ENCODE measurements at regions of chr20 and their contacts with region 1.

Region 1: GRCh38 chr20:25310268-25310920 is 62.5 kb downstream of the PYGB start:
- DNase-seq: peak; percentile 71 to 91
- H3K4me3 ChIP-seq: peak overlapping the region; percentile 39; the same call in 1 of the 2 replicates
- H3K27ac ChIP-seq: peak overlapping the region; percentile 80
- H3K4me1 ChIP-seq: peaks cover 43% of the 10 kb centered on the region
- H3K27me3 ChIP-seq: no peaks in the 10 kb centered on the region
- CTCF ChIP-seq: peak; percentile 68

Region 2: DNA sequence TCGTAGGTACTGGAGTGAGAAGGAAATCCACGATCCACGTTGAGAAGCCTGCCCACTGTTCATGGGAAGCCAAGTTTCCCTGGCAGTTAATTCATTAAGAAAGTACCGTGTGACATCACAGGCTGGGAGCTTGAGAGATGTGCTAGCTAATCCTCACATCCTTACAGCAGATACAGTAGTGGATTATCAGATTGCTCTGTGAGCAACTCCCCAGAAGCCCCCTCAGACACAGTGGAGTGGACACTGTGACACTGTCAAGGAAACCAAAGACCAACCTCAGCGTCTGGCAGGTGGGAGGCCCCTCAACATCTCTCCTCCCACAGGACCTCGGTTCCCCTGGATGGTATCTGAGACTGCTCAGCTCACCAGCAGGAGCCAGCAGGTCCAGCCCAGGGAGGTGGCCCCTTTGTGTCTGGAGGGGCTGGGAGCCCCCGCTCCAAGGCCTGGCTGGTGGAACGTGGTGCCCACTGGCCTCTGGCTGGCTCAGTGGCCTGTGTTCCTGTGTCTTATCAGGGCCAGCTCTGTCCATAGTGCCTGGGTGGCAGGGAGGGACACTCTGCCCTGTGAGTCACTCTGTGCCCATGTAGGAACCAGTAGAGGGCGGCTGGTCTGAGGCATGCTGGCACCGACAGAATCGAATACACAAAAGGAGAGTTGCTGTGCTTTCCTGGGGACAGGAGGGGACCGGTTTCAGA is 55.3 kb before region 1 on chr20:
- CTCF ChIA-PET with region 1: no interaction called
- POLR2A ChIA-PET with region 1: no interaction called
- intact Hi-C with region 1: loop called (anchors 2 kb)
- DNase-seq: peak in 1 of 2 experiments; percentile 89
- H3K4me3 ChIP-seq: no peak overlapping the region; the same call in 1 of the 2 replicates
- H3K27ac ChIP-seq: peak overlapping the region; percentile 86; the same call in 1 of the 2 replicates
- H3K4me1 ChIP-seq: peaks cover 65% of the 10 kb centered on the region
- H3K27me3 ChIP-seq: no peaks in the 10 kb centered on the region
- CTCF ChIP-seq: no peak

Region 3: GRCh38 chr20:25369529-25369928 is 59.1 kb after region 1 on chr20:
- CTCF ChIA-PET with region 1: interaction called, 16 read pairs
- POLR2A ChIA-PET with region 1: no interaction called
- intact Hi-C with region 1: no loop called
- DNase-seq: no peak
- H3K4me3 ChIP-seq: no peak overlapping the region
- H3K27ac ChIP-seq: no peak overlapping the region
- H3K4me1 ChIP-seq: no peaks in the 10 kb centered on the region
- H3K27me3 ChIP-seq: no peaks in the 10 kb centered on the region
- CTCF ChIP-seq: no peak

Region 4: GRCh38 chr20:25382704-25383565 is 72.5 kb after region 1 on chr20:
- CTCF ChIA-PET with region 1: no interaction called
- POLR2A ChIA-PET with region 1: interaction called, 24 read pairs
- intact Hi-C with region 1: no loop called
- DNase-seq: no peak
- H3K4me3 ChIP-seq: no peak overlapping the region
- H3K27ac ChIP-seq: no peak overlapping the region
- H3K4me1 ChIP-seq: peaks cover 21% of the 10 kb centered on the region
- H3K27me3 ChIP-seq: no peaks in the 10 kb centered on the region
- CTCF ChIP-seq: no peak

Region 5: DNA sequence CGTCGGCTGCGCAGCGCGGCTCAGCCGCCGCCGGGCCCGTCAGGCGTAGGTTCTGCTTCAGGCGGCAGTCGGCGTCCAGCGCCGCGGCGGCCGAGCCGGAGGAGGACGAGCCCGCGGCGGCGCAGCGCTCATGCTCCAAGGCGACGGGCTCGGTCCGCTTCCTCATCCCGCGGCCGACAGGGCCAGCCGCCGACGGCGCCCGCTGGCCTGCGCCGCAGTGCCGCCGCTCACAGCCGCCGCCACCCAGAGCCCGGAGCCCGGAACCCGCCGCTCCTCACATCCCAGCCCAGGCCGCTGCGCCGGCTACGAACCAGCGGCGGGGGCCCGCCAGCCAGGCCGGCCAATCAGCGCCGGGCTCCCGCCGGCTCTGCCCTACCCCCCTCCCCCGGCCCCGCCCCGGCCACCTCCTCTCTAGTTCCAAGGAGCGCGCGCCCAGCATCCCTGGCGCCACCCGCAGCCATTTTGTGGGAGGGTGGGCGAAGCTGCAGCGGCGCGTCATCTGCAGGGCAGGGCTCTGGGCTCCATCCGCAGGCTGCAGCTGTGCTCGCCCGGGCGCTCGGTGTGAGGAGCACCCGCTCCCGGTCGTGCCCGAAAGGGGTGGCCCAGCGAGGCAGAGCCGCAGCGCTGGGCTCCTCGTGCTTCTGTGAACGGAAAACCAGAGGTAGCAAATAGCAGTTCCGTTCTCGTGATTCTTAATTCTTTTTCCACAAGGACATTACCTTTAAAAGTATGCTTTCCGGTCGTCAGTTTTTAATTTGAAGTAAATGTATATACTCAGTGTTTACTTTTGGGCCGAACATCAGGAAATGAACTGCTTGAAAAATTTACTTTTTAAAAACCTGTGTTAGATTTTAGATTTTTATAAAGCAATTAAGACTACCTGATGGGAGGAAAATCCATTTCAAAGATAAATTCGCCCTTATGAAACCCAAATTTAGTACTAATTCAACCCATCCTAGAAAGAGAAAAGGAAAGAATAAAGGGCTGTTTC is 80.4 kb after region 1 on chr20 and contains the start of gene ABHD12:
- CTCF ChIA-PET with region 1: no interaction called
- POLR2A ChIA-PET with region 1: interaction called, 8 read pairs
- intact Hi-C with region 1: loop called (anchors 2 kb)
- DNase-seq: peak; percentile 84 to 96
- H3K4me3 ChIP-seq: peak within 1 kb of the TSS; percentile 93
- H3K27ac ChIP-seq: peak within 1 kb of the TSS; percentile 48
- H3K4me1 ChIP-seq: peaks cover 18% of the 10 kb centered on the region
- H3K27me3 ChIP-seq: no peaks in the 10 kb centered on the region
- CTCF ChIP-seq: no peak
- total RNA-seq, gene ABHD12: 60.1 and 72.6 TPM in 2 replicates

Region 6: DNA sequence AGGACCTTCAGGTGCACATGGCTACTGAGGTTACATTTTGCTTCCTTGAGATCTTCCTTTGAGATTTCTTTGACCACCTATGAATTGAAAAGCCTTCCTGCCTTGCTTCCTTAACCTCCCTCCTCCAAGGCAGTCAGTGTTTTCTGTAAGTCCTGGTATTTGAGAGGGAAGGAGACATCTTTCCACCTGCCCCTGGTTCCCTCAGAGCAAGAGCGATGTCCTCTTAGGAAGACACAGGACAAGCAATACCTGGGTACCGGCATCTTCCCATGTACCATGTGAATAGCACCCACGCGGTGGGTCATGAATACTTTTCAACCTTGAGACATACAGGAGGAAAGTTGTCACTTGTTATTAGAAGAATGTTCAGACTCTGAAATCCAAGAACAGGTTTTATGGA is 134.2 kb after region 1 on chr20:
- CTCF ChIA-PET with region 1: no interaction called
- POLR2A ChIA-PET with region 1: interaction called, 16 read pairs
- intact Hi-C with region 1: no loop called
- DNase-seq: no peak
- H3K4me3 ChIP-seq: no peak overlapping the region
- H3K27ac ChIP-seq: no peak overlapping the region
- H3K4me1 ChIP-seq: no peaks in the 10 kb centered on the region
- H3K27me3 ChIP-seq: no peaks in the 10 kb centered on the region
- CTCF ChIP-seq: no peak

Measured in PC-9 (cell line).